Testis (tissue), 5 donors: ENCODE measurements at regions of chr6 and their contacts with region 1.

Region 1: GRCh38 chr6:34986845-34987246 is 97.8 kb downstream of the ANKS1A start:
- DNase-seq: peak; percentile 75
- H3K4me3 ChIP-seq: no peak overlapping the region
- H3K27ac ChIP-seq: peak overlapping the region; percentile 9 to 60
- H3K4me1 ChIP-seq: peaks cover 19% of the 10 kb centered on the region
- H3K27me3 ChIP-seq: no peaks in the 10 kb centered on the region
- CTCF ChIP-seq: peak; percentile 88 to 92 (median 90)
- POLR2A ChIP-seq: no peak

Region 2: DNA sequence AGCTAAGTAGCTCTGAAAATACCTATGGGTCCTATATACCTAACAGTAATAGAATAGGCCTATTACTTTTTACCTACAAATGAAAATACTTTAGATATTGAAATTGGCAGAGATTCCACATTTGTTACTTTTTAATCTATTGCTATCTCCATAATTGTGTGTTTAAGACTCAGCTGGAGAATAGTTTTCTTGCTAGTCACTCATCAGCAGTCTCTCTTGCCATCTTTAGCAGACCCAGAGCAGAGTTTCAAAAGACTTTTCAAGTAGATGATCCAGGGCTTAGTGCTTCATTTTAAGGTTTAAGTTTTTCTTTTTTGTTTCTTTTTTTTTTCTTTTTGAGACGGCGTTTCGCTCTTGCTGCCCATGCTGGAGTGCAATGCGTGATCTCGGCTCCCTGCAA is 84.9 kb before region 1 on chr6:
- intact Hi-C with region 1: no loop called
- DNase-seq: no peak
- H3K4me3 ChIP-seq: no peak overlapping the region
- H3K27ac ChIP-seq: peak overlapping the region in 1 of 2 donors; percentile 38
- H3K4me1 ChIP-seq: peaks cover 50% of the 10 kb centered on the region
- H3K27me3 ChIP-seq: no peaks in the 10 kb centered on the region
- CTCF ChIP-seq: no peak
- POLR2A ChIP-seq: no peak

Region 3: GRCh38 chr6:35139908-35140655 is 153.2 kb after region 1 on chr6:
- intact Hi-C with region 1: loop called (anchors 2 kb)
- DNase-seq: peak; percentile 51
- H3K4me3 ChIP-seq: peak overlapping the region; percentile 48 to 62
- H3K27ac ChIP-seq: peak overlapping the region; percentile 63 to 78
- H3K4me1 ChIP-seq: peaks cover 18% of the 10 kb centered on the region
- H3K27me3 ChIP-seq: no peaks in the 10 kb centered on the region
- CTCF ChIP-seq: peak; percentile 62 to 93 (median 85)
- POLR2A ChIP-seq: no peak

Region 4: GRCh38 chr6:35240840-35241801 is 254.3 kb after region 1 on chr6:
- intact Hi-C with region 1: loop called (anchors 10 kb)
- DNase-seq: peak; percentile 83
- H3K4me3 ChIP-seq: no peak overlapping the region
- H3K27ac ChIP-seq: no peak overlapping the region
- H3K4me1 ChIP-seq: no peaks in the 10 kb centered on the region
- H3K27me3 ChIP-seq: no peaks in the 10 kb centered on the region
- CTCF ChIP-seq: peak; percentile 86 to 96 (median 90)
- POLR2A ChIP-seq: no peak